ENCODE measurements at regions of chr14 and their contacts with region 1.

Region 1: GRCh38 chr14:75906676-75907280 is 75.0 kb downstream of the TGFB3 start:
- DNase-seq: peak; percentile 35 to 65
- ATAC-seq: peak; percentile 53 to 81 (median 72)
- H3K4me3 ChIP-seq: no peak overlapping the region
- H3K27ac ChIP-seq: peak overlapping the region; percentile 58
- H3K4me1 ChIP-seq: peaks cover 41% of the 10 kb centered on the region
- H3K27me3 ChIP-seq: no peaks in the 10 kb centered on the region
- CTCF ChIP-seq: peak; percentile 94

Region 2: DNA sequence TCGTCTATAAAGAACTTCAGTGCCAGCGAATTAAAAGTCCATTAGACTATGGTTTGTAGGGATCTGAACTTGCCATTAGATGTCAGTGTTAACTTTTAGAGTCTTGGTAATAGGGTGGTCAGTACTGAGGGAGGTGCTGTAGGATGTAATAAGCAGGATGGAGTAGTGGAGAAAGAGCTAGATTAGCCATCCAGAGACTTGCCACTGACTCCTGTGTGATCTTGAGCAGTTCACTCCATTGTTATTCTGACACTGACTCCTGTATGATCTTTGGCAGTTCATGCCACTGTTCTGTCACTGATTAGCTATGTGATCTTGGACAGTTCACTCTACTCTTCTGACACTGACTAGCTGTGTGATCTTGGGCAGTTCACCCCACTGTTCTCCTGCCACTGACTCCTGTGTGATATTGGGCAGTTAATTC is 112.2 kb before region 1 on chr14:
- intact Hi-C with region 1: loop called in 1 of 2 experiments (anchors 10 kb)
- DNase-seq: no peak
- ATAC-seq: peak; percentile 82 to 92 (median 86)
- H3K4me3 ChIP-seq: no peak overlapping the region
- H3K27ac ChIP-seq: no peak overlapping the region
- H3K4me1 ChIP-seq: no peaks in the 10 kb centered on the region
- H3K27me3 ChIP-seq: no peaks in the 10 kb centered on the region
- CTCF ChIP-seq: peak; percentile 50

Region 3: GRCh38 chr14:75941030-75941429 is 34.3 kb after region 1 on chr14:
- intact Hi-C with region 1: loop called in 1 of 2 experiments (anchors 2 kb)
- DNase-seq: peak; percentile 72 to 89
- ATAC-seq: peak; percentile 97 to 98 (median 98)
- H3K4me3 ChIP-seq: no peak overlapping the region
- H3K27ac ChIP-seq: peak overlapping the region; percentile 84
- H3K4me1 ChIP-seq: peaks cover 5% of the 10 kb centered on the region
- H3K27me3 ChIP-seq: no peaks in the 10 kb centered on the region
- CTCF ChIP-seq: no peak

Region 4: DNA sequence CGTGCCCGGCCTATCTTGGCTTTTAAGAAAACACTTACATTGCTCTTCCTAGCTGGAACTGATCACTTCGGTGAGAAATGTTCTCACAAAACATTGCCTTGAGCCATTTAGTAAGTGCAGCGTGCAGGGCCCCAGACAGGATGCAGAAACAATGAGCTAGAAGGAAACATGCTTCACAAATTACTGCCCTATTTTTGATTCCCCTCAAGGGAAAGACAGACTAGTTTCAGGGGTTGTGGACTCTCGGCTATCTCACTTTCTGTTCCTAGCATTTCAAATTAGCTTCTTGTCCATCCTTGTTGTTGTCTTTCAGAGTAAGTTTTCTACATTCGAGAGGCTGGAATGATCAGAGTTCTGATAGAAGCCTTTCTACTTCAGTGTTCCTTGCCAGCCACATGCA is 53.5 kb after region 1 on chr14:
- intact Hi-C with region 1: no loop called
- DNase-seq: no peak
- ATAC-seq: no peak
- H3K4me3 ChIP-seq: no peak overlapping the region
- H3K27ac ChIP-seq: no peak overlapping the region
- H3K4me1 ChIP-seq: no peaks in the 10 kb centered on the region
- H3K27me3 ChIP-seq: no peaks in the 10 kb centered on the region
- CTCF ChIP-seq: no peak

Region 5: GRCh38 chr14:76022991-76023390 is 116.2 kb after region 1 on chr14:
- intact Hi-C with region 1: no loop called
- DNase-seq: no peak
- ATAC-seq: no peak
- H3K4me3 ChIP-seq: no peak overlapping the region
- H3K27ac ChIP-seq: no peak overlapping the region
- H3K4me1 ChIP-seq: no peaks in the 10 kb centered on the region
- H3K27me3 ChIP-seq: no peaks in the 10 kb centered on the region
- CTCF ChIP-seq: no peak

Measured in psoas muscle (tissue), 8 donors.